AG04450 (cell line): ENCODE measurements at regions of chr10 and their contacts with region 1.

Region 1: DNA sequence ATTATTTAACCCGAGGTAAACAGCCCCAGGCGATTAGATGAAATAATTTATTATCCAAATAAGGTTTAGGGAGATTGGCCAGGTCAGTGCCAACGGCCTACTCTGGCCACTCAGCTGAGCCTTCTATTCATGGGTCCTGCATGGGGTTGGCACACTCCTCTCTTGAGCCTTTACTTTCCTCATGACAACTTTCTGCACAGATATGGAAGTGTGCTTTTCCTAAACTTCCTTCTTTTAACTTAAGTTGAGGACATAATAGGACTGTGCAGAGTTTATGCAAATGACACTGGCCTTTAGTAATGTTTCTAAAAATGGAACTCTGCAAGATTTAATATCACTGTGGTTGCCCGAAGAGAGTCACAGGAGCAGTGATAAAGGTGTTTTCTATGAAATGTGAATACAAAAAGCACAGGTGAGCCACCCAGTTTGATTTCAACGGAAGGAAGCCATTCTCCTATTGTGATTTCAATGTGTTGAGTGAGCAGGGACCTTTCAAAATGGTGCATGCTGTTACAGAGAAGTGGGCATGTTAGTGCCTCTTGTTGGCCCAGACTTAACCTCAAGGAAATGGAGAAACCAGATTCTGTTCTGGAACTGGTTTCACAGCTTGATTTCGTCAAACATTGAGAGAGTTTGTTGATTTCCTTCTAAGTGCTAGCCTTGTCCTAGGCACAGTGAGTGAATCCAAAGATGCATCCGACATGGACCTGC is 55.7 kb downstream of the LYZL2 start:
- DNase-seq: no peak
- H3K4me3 ChIP-seq: no peak overlapping the region
- H3K27ac ChIP-seq: no peak overlapping the region
- H3K27me3 ChIP-seq: peaks cover 31% of the 10 kb centered on the region
- CTCF ChIP-seq: no peak

Region 2: DNA sequence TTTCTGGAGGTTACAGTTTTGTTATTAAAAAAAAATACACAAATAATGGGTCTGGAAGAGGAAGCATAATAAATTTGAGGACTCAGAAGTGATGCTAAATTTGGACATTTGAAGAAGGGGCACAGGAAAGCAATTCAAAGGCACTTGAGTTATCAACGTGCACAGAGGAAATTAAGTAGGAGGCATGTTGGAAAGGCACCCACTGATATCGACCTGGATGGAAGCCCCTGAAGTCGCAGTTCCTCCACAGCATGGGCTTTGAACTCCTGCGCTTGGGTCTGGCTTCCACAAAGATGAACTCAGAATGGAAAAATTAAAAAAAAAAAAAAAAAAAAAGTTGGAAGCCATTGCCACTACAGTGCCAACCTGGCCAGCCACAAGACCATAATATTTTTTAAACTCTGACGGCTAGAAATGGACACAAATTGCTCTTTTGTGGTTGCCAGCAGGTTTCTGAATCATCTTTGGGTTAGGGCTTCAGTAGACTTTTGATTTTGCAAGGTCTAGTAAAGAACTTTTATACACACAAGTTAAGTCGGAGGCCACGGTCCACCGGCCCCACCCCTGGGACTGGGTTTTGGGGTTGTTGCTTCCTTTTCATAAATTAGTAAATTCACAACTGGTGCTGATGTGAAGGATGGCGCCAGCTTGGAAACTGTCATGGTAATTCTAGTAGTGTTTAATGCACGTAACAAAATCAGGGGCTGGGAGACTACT is 536.1 kb before region 1 on chr10:
- CTCF ChIA-PET with region 1: no interaction called
- POLR2A ChIA-PET with region 1: interaction called, 11 read pairs
- DNase-seq: no peak
- H3K4me3 ChIP-seq: no peak overlapping the region
- H3K27ac ChIP-seq: no peak overlapping the region
- H3K27me3 ChIP-seq: no peaks in the 10 kb centered on the region
- CTCF ChIP-seq: no peak

Region 3: DNA sequence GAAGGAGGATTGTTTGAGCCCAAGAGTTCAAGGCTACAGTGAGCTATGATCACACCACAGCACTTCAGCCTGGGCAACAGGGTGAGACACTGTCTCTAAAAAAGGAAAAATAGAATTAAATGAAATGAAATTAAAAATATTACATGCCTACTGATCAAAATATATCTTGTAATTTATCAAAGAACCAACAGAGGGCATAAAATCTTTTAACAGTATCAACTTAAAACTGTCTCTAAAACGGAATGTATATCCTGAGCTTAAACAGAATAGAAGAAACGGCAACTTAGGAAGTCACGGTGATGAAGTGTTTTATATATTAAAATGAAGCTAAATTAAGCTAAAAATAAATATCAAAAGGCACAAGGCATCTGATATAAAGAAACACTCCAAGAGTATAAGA is 303.6 kb before region 1 on chr10:
- CTCF ChIA-PET with region 1: no interaction called
- POLR2A ChIA-PET with region 1: no interaction called
- DNase-seq: no peak
- H3K4me3 ChIP-seq: no peak overlapping the region
- H3K27ac ChIP-seq: no peak overlapping the region
- H3K27me3 ChIP-seq: peaks cover 14% of the 10 kb centered on the region
- CTCF ChIP-seq: peak; percentile 37

Region 4: DNA sequence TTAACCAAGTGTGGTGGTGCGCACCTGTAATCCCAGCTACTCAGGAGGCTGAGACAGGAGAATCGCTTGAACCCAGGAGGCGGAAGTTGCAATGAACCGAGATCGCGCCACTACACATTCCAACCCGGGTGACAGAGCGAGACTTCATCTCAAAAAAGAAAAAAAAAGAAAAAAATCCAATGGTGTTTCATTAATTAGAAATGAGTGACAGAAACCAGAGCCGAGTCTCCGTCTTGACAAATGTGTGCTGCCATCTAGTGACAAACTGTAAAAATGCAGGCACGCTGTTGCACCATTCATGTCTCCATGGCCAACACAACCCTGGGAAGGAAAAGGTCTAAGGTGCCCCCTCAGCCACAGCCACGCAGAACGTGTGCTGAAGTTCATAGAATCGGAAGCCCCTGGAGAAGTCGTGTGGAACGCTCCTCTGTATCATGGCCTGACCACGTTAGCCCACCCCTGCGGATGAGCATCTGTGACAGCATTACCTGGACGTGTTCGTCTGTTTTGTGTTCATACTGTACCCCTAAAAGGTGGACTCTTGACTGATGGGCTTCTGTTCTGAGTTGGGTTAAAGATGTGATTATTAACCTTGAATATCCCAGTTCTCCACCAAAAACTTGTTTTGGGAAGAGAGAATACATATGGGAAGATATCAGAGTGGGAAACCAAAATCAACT is 39.3 kb before region 1 on chr10:
- CTCF ChIA-PET with region 1: no interaction called
- POLR2A ChIA-PET with region 1: no interaction called
- DNase-seq: peak; percentile 38
- H3K4me3 ChIP-seq: no peak overlapping the region
- H3K27ac ChIP-seq: no peak overlapping the region
- H3K27me3 ChIP-seq: peaks cover 5% of the 10 kb centered on the region
- CTCF ChIP-seq: peak; percentile 89

Region 5: DNA sequence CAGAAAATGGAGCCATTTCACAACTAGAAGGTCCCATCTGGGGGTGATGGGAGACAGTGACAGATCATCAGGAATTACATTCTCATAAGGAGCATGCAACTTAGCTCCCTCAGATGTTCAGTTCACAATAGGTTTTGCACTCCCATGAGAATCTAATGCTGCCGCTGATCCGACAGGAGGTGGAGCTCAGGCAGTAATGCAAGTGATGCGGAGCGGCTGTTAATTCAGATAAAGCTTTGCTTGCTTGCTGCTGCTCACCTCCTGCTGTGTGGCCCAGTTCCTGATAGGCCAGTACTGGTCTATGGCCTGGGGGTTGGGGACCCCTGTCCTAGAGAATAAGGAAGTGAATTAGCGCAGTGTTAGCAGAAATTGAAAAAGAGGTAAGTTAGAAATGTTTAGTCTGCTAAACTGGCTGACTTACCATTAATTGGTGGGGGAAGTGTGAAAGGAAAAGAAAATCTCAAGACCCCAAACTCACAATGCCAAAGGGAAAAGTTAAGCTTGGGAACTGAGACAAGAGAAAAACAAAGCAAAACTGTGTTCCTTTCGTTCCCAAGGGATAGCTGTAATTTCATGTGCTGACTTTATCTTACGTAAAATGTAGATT is 20.8 kb before region 1 on chr10:
- CTCF ChIA-PET with region 1: no interaction called
- POLR2A ChIA-PET with region 1: no interaction called
- DNase-seq: no peak
- H3K4me3 ChIP-seq: no peak overlapping the region
- H3K27ac ChIP-seq: no peak overlapping the region
- H3K27me3 ChIP-seq: peaks cover 2% of the 10 kb centered on the region
- CTCF ChIP-seq: no peak